Posterior cingulate gyrus (tissue), 11 donors: ENCODE measurements at regions of chr3 and their contacts with region 1.

Region 1: DNA sequence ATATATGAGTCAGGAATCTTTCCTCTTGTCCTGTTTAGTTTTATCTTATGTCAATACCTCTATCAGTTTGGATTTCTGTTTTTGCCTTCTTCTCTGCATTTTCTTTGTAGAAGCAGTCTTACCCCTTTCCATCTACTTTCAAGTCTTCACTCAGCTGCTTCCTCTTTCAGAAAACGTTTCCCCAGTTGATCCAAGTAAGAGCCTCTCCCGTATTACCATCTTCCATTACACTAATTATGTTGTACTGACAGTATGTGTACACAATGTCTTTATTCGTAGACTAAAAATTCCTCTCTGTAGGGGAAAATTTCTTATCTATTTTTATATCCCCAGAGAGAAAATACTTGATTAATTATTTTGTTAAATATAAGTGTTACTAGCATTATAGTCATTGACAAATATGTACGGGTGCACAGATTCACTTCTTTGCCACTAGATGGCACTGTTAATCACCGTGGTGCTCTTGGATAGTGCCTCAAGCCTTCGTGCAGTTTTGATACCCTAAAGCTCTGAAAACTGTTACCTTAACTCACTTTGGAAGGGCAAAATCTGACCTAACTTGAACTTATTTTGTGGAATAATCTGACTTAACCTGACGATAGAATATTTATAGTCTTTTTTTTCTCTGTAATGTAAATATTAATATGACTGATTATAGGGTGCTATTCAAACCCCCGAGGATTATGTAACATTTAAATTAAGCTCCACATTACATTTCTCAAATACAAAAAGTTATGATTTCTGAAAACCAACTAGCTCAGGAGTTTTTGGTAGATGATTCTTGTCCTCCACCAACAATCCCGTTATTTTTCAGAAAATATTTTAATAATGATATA is 74.2 kb upstream of the POU1F1 start:
- DNase-seq: peak in 2 of 10 donors; percentile 17 to 20

Region 2: DNA sequence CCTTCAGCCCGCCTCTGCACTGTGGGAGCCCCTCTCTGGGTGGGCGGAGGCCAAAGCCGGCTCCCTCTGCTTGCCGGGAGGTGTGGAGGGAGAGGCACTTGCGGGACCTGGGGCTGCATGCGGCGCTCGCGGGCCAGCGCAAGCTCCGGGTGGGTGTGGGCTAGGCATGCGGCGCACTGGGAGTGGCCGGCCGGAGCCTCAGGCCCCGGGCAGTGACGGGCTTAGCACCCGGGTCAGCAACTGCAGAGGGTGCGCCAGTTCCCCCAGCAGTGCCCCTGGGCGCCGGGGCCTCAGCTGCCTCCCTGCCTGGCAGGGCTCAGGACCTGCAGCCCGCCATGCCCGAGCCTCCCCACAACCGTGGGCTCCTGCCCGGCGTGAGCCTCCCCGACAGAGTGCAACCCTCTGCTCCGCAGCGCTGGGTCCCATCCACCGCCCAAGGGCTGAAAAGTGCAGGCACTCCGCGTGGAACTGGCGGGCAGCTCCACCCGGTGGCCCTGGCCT is 24.7 kb after region 1 on chr3:
- intact Hi-C with region 1: no loop called
- DNase-seq: peak in 3 of 10 donors; percentile 60 to 78 (median 66)

Region 3: GRCh38 chr3:87503900-87504508 is 153.4 kb after region 1 on chr3:
- intact Hi-C with region 1: loop called (anchors 5 kb)
- DNase-seq: no peak

Region 4: DNA sequence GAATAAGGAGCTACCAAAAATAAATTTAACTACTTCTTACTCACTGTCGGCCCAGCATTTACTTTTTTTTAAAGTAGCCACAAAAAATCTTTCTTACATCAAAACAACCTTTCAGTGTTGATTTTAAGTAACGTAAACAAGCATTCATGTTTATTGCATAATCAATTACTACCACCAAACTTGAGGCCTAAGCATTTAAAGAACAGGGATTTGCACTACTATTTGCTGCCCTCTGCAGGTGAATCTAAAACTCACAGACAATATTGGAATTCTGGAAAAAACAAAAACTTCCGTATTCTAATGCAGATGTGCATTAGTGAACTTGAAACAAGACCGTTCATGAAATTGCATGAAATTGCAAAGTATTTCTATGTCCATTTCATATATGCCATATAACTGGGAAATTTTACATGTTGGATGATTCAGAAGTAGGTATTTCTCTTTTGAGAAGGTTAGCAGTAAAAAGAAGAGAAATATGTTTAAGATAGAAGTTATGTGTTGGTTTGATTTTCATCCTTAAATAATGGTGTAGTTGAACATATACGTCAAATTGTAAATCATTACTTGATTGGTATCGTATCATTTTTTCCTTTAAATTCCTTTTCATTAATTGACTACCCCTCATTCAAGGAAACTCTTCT is 652.7 kb after region 1 on chr3:
- intact Hi-C with region 1: loop called (anchors 2 kb)
- DNase-seq: no peak

Region 5: GRCh38 chr3:88113311-88114162 is 763.0 kb after region 1 on chr3:
- intact Hi-C with region 1: loop called (anchors 5 kb)
- DNase-seq: peak in 4 of 10 donors; percentile 17 to 53 (median 30)